ENCODE measurements at regions of chr7 and their contacts with region 1.

Region 1: DNA sequence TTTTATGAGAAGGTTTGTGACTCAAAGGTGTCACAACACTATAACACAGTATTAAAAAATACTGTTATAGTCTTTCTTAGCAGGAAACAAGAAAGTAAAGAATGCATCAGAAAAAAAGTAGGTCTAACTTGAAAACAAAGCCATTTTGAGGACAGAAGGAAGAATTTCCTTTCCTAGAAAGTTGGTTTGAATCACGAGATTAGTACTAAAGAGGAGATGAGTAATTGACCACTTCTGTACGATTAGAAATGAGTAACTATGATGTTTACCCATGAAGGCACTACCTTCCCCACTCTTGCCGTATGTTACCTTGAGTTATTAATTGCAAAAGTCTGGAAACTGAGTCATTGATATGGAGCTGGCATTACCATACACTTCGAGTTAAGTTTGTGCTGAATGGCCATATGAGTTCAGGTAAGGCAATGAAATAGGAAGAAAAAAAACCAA is 65.2 kb downstream of the FAM185A start:
- DNase-seq: no peak
- H3K4me3 Mint-ChIP-seq: no peak overlapping the region
- H3K27ac Mint-ChIP-seq: peak overlapping the region; percentile 32
- H3K4me1 Mint-ChIP-seq: peaks cover 12% of the 10 kb centered on the region
- H3K27me3 Mint-ChIP-seq: no peaks in the 10 kb centered on the region

Region 2: GRCh38 chr7:102834999-102835398 is 21.0 kb after region 1 on chr7:
- intact Hi-C with region 1: loop called (anchors 1 kb)
- DNase-seq: no peak
- H3K4me3 Mint-ChIP-seq: no peak overlapping the region
- H3K27ac Mint-ChIP-seq: peak overlapping the region; percentile 20
- H3K4me1 Mint-ChIP-seq: peaks cover 10% of the 10 kb centered on the region
- H3K27me3 Mint-ChIP-seq: peaks cover 20% of the 10 kb centered on the region

Region 3: DNA sequence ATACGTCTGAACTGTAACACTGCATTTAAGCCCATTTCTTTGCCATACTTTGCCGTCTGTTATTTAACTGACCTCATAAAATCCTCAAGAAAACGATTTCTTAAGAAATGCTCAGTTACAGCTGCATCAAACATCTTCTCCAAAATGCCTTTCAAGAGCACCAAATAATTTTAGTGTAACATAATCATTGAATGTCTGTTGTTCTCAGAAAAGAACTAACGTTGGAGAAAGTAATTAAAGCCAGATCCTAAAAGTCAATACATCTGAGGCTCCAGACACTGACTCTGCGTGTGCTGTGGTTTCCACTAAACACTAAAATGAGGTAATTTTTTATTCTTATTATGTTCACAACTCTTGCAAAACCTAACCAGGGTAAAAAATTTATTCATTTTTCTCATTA is 35.0 kb after region 1 on chr7:
- intact Hi-C with region 1: no loop called
- DNase-seq: no peak
- H3K4me3 Mint-ChIP-seq: no peak overlapping the region
- H3K27ac Mint-ChIP-seq: no peak overlapping the region
- H3K4me1 Mint-ChIP-seq: peaks cover 1% of the 10 kb centered on the region
- H3K27me3 Mint-ChIP-seq: peaks cover 23% of the 10 kb centered on the region

Region 4: DNA sequence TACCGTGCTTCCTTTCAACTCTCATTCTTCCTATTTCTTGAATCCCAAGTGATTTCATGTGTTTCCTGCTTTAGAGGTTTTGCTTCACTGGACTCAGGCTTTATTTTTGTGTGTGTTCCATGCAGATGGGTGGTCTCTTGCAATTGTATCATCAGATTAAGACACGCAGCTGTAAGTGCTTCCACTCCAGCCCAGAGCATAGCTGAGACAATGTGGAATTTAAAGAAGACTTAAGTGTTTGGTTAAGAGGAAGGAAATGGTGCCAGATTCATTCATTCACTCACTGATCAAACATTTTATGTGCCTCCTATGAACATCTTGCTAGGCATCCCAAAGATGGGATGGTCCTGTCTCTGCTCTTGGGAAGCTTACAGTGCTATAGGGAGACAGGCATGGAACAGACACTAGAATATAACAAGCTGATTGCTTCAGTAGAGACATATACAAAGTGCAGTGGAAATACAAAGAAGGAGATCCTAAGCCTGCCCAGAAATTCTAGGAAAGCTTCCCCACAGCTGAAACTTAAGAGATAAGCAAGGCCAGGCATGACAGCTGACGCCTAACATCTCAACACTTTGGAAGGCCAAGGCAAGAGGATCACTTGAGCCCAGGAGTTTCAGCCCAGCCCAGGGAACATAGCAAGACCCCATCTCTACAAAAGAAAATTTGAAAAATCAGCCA is 52.6 kb after region 1 on chr7:
- intact Hi-C with region 1: no loop called
- DNase-seq: no peak
- H3K4me3 Mint-ChIP-seq: no peak overlapping the region
- H3K27ac Mint-ChIP-seq: no peak overlapping the region
- H3K4me1 Mint-ChIP-seq: peaks cover 5% of the 10 kb centered on the region
- H3K27me3 Mint-ChIP-seq: peaks cover 14% of the 10 kb centered on the region

Region 5: DNA sequence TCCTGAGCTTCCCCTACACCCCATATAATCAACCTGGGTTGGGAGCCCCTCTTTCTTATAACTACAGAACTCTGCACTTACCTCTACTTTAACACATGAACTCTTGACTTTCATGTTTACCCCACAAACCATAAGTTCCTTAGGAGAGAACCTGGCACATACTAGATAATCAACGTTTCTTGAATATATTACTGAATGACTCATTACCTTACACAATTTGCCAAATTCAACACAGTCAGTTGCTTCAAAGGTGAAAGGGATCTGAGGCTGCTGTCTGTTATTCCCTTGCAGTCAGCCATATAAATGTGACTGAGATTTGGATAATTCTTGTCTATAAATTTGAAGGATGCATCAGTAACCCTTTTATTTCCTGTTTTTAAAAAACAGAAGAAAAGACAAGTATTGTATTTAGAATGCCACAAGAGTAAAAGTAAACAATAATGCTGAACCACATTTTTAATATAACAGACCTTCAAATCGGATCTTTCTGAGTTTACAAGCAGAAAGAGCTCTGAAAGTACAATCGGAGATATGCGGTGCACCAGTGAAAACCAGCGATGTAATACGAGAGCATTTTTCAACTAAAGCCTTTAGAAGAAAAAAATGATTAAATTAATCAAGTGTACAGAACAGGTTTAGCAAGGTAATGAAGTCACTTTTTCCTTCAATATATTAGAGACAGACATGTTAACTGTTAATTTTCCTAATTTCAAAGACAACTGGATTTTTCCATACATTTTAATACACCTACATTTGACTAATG is 69.2 kb after region 1 on chr7:
- intact Hi-C with region 1: no loop called
- DNase-seq: no peak
- H3K4me3 Mint-ChIP-seq: no peak overlapping the region
- H3K27ac Mint-ChIP-seq: no peak overlapping the region
- H3K4me1 Mint-ChIP-seq: no peaks in the 10 kb centered on the region
- H3K27me3 Mint-ChIP-seq: peaks cover 7% of the 10 kb centered on the region

Region 6: GRCh38 chr7:102933763-102934162 is 119.7 kb after region 1 on chr7:
- intact Hi-C with region 1: no loop called
- DNase-seq: no peak
- H3K4me3 Mint-ChIP-seq: no peak overlapping the region
- H3K27ac Mint-ChIP-seq: no peak overlapping the region
- H3K4me1 Mint-ChIP-seq: no peaks in the 10 kb centered on the region
- H3K27me3 Mint-ChIP-seq: no peaks in the 10 kb centered on the region